Left cardiac atrium (tissue), 4 donors: ENCODE measurements at regions of chr10 and their contacts with region 1.

Region 1: DNA sequence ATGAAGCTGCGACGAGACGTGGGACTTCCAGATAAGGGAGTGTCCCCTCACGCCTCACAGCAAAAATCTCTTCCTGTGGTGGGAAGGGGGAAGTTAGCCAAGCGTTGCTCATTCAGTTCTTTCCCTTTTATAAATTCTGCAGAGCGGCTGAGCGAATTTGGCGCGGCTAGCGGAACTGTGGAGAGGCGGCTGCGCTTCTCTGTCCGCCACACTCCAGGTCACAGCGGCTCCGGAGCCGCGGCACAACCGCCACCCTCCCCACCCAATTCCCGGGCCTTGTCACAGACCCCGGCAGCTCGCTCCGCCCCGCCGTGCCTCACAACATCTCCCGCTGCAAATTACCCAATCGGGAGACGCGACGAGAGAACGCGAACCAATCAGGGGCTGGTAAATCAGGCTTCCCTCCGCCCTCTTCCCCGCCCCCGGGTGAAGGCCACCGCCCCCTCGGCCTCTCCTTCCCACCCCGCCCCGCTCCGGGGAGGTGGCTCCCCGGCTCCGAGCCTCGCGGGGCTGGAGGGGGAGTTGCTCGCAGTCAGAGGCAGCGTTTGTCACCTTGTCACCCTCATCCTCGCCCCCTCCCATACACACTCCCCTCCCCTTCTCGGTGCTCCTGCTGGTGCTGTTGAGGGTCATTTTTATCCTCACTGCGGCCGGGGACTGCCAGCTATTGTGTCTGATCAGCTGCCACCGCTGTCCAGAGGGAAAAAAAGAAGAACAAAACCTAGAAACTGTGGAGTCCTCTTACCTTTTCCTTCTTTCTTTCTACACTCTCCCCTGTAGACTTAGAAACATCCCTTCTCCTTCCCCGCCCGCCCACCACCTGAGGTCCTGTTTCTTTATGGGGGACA is 918 bp upstream of the ARHGAP21 start:
- DNase-seq: peak; percentile 99
- ATAC-seq: peak; percentile 93

Region 2: DNA sequence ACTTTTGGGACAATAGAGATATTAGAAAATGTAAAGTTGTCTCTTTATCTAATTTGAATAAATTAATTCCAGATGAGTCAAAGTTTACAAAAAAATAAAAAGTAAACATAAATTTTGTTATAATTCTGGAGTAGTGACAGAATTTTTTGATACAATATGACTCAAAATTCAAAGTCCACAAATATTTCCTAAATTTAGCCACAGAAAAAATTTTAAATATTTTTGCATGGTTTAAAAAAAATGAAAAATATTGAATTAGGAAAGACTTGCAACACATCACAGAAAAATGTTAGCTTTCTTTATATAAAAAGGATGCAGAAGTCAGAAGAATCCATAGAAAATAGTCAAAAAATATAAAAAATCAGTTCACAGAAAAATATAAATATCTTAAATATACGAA is 118.6 kb before region 1 on chr10:
- intact Hi-C with region 1: no loop called
- DNase-seq: no peak
- ATAC-seq: no peak

Region 3: DNA sequence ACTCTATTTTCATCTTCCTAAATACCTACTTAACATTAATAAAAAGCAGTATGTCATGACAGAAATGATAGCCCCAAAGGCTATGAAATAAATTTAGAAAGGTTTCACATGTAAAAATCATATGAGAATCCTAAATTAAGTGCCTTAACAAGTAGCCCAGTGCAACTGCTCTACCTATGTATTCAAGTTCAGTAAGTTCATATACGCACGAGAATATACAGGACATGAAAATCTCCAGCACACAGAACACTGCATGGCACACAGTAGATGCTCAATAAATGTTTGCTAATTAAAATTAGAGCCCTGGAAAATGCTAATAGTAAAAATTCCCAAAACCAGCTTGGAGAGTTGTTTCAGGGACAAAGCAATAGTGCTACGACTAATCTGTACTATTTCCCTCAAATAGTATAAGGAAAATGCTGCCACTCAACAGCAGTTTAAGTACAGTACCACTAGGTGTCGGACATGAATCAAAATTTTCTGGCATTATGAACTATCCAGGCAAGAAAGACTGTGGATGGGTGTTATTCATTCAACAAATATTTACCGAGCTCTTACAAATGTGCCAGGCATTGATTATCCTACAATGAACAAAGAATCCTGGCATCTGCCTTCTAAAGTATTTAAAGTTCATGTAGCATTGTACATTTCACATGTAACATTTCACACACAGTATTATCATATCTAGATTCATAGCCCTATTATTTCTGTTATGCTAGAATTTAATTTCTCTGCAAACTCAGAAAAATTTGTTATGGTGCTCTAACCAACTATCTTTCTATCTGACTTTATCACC is 81.8 kb before region 1 on chr10:
- intact Hi-C with region 1: loop called (anchors 2 to 10 kb)
- DNase-seq: no peak
- ATAC-seq: peak; percentile 86 to 95

Region 4: DNA sequence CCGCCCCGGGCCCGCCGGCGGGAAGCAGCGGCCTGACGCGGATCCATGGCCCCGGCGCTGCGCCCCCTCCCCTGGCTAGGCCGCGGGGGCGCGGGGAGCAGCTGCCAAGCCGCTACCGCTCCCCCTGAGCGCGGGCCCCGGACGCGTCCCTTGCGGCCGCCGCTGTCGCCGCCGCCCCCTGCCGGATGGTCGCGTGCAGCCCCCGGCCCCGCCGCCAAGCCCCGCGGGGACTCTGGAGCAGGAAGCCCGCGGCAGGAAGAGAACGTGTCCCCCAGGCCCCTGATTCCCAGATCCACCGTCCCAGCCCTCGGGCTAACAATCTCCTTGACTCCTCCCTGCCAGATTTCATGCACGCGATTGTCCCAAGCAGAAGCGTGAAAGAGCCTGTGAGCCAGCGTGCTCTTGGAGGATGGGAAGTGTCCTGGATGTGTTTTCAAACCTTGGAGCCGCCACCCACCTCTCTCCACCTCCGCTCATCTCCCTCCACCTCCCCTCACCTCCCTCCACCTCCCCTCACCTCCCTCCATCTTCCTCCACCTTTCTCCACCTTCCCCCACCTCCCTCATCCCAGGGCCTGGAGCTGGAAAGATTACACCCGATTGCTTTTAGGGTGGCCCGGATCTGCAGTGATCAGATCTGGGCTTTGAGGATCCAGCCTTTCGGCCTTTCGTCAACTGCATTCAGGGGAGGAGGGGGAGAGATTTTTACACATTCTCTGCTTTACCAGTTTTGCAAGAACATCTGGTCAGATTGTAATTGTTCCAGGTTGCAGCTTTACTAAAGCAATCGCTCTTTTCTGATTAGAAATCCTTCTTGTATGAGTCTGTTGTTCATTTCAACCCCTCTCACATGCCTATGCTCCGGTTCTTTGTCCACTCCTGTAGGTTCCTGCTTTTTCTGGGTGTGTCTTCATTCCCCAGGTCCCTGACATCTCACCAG is 228.4 kb after region 1 on chr10:
- intact Hi-C with region 1: loop called in 1 of 2 experiments (anchors 10 kb)
- DNase-seq: peak; percentile 51
- ATAC-seq: peak; percentile 67 to 69

Region 5: GRCh38 chr10:24989867-24990266 is 265.3 kb after region 1 on chr10:
- intact Hi-C with region 1: loop called in 1 of 2 experiments (anchors 10 kb)
- DNase-seq: no peak
- ATAC-seq: no peak

Region 6: GRCh38 chr10:25016376-25017154 is 292.0 kb after region 1 on chr10 and contains the start of gene THNSL1:
- intact Hi-C with region 1: loop called in 1 of 2 experiments (anchors 2 kb)
- DNase-seq: peak; percentile 99
- ATAC-seq: peak; percentile 99 to 100
- total RNA-seq, gene THNSL1: 2.6 to 4.4 TPM

Region 7: GRCh38 chr10:25080880-25081581 is 356.4 kb after region 1 on chr10:
- intact Hi-C with region 1: loop called in 1 of 2 experiments (anchors 10 kb)
- DNase-seq: peak; percentile 84
- ATAC-seq: peak; percentile 92 to 97